ENCODE measurements at regions of chr10 and their contacts with region 1.

Region 1: GRCh38 chr10:123582084-123582989 is 83.8 kb upstream of the GPR26 start:
- DNase-seq: peak in 7 of 9 donors; percentile 38 to 61 (median 46)
- ATAC-seq: peak; percentile 64
- H3K4me3 ChIP-seq: no peak overlapping the region
- H3K4me3 Mint-ChIP-seq: no peak overlapping the region
- H3K27ac ChIP-seq: no peak overlapping the region
- H3K27ac Mint-ChIP-seq: no peak overlapping the region
- H3K4me1 ChIP-seq: no peaks in the 10 kb centered on the region
- H3K4me1 Mint-ChIP-seq: peaks cover 0 to 3% (median 0%) of the 10 kb centered on the region in 7 donors
- H3K27me3 ChIP-seq: peaks cover 0 to 2% of the 10 kb centered on the region in 2 donors
- H3K27me3 Mint-ChIP-seq: peaks cover 17 to 80% (median 44%) of the 10 kb centered on the region in 5 donors

Region 2: GRCh38 chr10:123548770-123549169 is 33.6 kb before region 1 on chr10:
- CTCF ChIA-PET with region 1: no interaction called
- POLR2A ChIA-PET with region 1: no interaction called
- intact Hi-C with region 1: no loop called
- DNase-seq: no peak
- ATAC-seq: no peak
- H3K4me3 ChIP-seq: no peak overlapping the region
- H3K4me3 Mint-ChIP-seq: no peak overlapping the region
- H3K27ac ChIP-seq: no peak overlapping the region
- H3K27ac Mint-ChIP-seq: no peak overlapping the region
- H3K4me1 ChIP-seq: no peaks in the 10 kb centered on the region
- H3K4me1 Mint-ChIP-seq: no peaks in the 10 kb centered on the region
- H3K27me3 ChIP-seq: no peaks in the 10 kb centered on the region
- H3K27me3 Mint-ChIP-seq: peaks cover 10 to 41% (median 27%) of the 10 kb centered on the region in 5 donors

Region 3: GRCh38 chr10:123655751-123656150 is 73.4 kb after region 1 on chr10:
- CTCF ChIA-PET with region 1: no interaction called
- POLR2A ChIA-PET with region 1: no interaction called
- intact Hi-C with region 1: no loop called
- DNase-seq: no peak
- ATAC-seq: no peak
- H3K4me3 ChIP-seq: no peak overlapping the region
- H3K4me3 Mint-ChIP-seq: no peak overlapping the region
- H3K27ac ChIP-seq: no peak overlapping the region
- H3K27ac Mint-ChIP-seq: no peak overlapping the region
- H3K4me1 ChIP-seq: no peaks in the 10 kb centered on the region
- H3K4me1 Mint-ChIP-seq: no peaks in the 10 kb centered on the region
- H3K27me3 ChIP-seq: no peaks in the 10 kb centered on the region
- H3K27me3 Mint-ChIP-seq: peaks cover 0 to 25% (median 4%) of the 10 kb centered on the region in 5 donors

Region 4: DNA sequence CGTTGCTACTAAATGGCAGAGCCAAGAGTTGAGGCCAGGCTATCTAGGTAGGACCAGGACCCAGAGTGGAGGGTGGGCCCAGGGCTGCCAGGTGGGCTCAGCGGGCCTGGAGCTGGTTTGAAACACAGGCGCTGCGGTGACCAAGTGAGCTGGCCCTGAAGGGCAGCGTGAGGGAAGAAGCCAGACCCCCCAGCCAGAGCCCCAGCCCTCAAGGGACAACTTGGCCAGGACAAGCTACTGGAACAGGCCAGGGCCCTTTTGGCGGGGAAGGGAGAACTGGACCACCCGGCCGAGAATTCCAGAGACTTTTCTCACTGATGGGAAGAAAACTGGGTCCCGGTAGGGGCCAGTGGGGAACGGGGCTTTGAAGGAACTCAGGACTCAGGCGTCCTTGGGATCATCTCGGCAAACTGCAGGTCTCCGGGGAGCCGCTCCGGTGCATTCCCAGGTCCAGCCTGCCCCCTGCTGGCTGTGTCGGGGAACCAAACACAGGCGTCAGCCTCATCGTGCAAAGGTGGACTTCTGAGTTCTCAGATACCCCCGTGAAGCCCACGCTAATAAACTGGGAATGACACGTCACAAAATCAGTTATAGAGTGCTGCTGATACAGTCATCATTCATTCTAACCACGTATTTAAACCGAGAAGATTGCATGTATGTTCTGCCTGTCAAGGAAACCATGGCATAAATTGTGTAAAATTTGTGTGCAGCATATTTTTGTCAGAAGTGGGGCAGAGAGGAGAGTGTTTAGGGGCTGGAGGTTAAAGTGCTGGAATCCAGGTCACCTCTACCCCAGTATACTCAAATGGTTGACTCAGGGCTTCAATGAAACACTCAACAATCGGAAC is 385.3 kb after region 1 on chr10:
- CTCF ChIA-PET with region 1: no interaction called
- POLR2A ChIA-PET with region 1: no interaction called
- intact Hi-C with region 1: loop called in 1 of 2 experiments (anchors 1 kb)
- DNase-seq: peak in 6 of 9 donors; percentile 5 to 58 (median 22)
- ATAC-seq: peak; percentile 45
- H3K4me3 ChIP-seq: no peak overlapping the region
- H3K4me3 Mint-ChIP-seq: no peak overlapping the region
- H3K27ac ChIP-seq: no peak overlapping the region
- H3K27ac Mint-ChIP-seq: peak overlapping the region in 1 of 9 donors; percentile 16
- H3K4me1 ChIP-seq: no peaks in the 10 kb centered on the region
- H3K4me1 Mint-ChIP-seq: peaks cover 0 to 10% (median 0%) of the 10 kb centered on the region in 7 donors
- H3K27me3 ChIP-seq: peaks cover 0 to 14% of the 10 kb centered on the region in 2 donors
- H3K27me3 Mint-ChIP-seq: peaks cover 44 to 85% (median 70%) of the 10 kb centered on the region in 5 donors

Region 5: GRCh38 chr10:124403548-124403947 is 821.2 kb after region 1 on chr10:
- CTCF ChIA-PET with region 1: no interaction called
- POLR2A ChIA-PET with region 1: no interaction called
- intact Hi-C with region 1: loop called in 1 of 2 experiments (anchors 5 kb)
- DNase-seq: peak in 7 of 9 donors; percentile 49 to 74 (median 67)
- ATAC-seq: peak; percentile 100
- H3K4me3 ChIP-seq: no peak overlapping the region
- H3K4me3 Mint-ChIP-seq: peak overlapping the region in 1 of 10 donors; percentile 38
- H3K27ac ChIP-seq: no peak overlapping the region
- H3K27ac Mint-ChIP-seq: peak overlapping the region; percentile 28 to 95 (median 75)
- H3K4me1 ChIP-seq: peaks cover 0 to 10% of the 10 kb centered on the region in 2 donors
- H3K4me1 Mint-ChIP-seq: peaks cover 8 to 11% (median 10%) of the 10 kb centered on the region in 7 donors
- H3K27me3 ChIP-seq: no peaks in the 10 kb centered on the region
- H3K27me3 Mint-ChIP-seq: no peaks in the 10 kb centered on the region

Measured in naive thymus-derived CD4-positive, alpha-beta T cell (primary cell).